ENCODE measurements at regions of chr12 and their contacts with region 1.

Region 1: DNA sequence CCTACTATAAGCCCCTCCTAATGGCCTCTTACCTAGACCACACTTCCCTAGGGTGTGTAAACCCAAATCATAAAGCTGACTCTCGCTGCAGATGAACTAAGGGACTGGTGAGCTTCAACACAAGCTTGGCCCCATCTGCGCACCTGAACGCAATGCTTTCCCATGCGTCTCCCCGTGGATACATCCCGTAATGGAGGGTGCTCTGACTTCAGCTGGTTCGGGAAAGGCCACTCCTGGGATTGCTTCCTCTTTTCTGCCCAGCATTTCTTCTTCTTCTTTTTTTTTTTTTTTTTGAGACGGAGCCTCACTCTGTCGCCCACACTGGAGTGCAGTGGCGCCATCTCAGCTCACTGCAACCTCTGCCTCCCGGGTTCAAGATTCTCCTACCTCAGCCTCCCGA is 27.7 kb upstream of the ETFBKMT start:
- DNase-seq: no peak
- H3K4me3 ChIP-seq: no peak overlapping the region
- H3K27ac ChIP-seq: no peak overlapping the region
- H3K4me1 ChIP-seq: no peaks in the 10 kb centered on the region
- H3K27me3 ChIP-seq: no peaks in the 10 kb centered on the region
- CTCF ChIP-seq: no peak
- POLR2A ChIP-seq: no peak

Region 2: DNA sequence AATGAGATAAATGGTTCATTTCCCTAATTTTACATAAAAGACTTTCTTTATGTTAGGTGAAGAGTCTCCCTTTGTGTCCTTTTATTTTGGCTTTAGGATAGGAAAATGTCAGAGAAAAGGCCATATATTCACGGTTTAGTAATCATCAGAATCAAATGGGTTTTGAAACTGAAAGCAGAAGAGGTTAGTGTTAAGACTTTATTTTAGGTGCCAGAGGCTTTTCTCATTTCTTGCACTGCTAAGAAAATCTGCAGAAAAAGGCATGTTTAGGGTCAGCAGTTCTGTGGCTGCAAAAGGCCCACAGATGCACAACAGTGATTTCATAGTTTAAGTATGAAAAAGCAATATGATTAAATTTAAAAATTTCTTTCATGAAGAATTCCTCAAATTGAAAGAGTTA is 225.4 kb before region 1 on chr12:
- intact Hi-C with region 1: loop called (anchors 2 kb)
- DNase-seq: no peak
- H3K4me3 ChIP-seq: no peak overlapping the region
- H3K27ac ChIP-seq: no peak overlapping the region
- H3K4me1 ChIP-seq: no peaks in the 10 kb centered on the region
- H3K27me3 ChIP-seq: no peaks in the 10 kb centered on the region
- CTCF ChIP-seq: no peak
- POLR2A ChIP-seq: no peak

Region 3: DNA sequence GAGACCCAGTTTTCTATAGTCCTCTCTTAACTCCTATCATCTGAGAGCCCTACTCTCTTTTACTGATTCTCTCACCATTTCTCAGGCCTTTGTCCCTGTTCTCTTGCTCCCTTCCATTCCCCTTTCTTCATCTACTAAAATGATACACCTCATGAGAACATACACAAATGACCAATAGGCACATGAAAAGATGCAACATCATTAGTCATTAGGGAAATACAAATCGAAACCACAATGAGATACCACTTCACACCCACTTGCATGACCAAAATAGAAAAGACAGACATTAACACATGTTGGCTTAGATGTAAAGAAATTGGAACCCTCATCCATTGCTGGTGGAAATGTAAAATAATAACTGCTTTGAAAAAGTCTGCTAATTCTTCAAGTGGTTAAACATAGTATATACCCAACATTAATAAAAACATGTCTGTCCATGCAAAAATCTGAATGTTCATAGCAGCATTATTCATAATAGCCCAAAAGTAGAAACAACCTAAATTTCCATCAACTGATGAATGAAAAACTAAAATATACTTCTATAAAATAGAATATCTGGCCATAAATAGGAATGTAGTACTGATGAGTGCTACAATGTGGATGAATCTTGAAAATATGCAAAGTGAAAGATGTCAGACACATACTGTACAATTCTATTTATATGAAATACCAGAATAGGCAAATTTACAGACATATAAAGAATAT is 106.8 kb before region 1 on chr12:
- intact Hi-C with region 1: no loop called
- DNase-seq: no peak
- H3K4me3 ChIP-seq: no peak overlapping the region
- H3K27ac ChIP-seq: no peak overlapping the region
- H3K4me1 ChIP-seq: no peaks in the 10 kb centered on the region
- H3K27me3 ChIP-seq: no peaks in the 10 kb centered on the region
- CTCF ChIP-seq: no peak
- POLR2A ChIP-seq: no peak

Region 4: DNA sequence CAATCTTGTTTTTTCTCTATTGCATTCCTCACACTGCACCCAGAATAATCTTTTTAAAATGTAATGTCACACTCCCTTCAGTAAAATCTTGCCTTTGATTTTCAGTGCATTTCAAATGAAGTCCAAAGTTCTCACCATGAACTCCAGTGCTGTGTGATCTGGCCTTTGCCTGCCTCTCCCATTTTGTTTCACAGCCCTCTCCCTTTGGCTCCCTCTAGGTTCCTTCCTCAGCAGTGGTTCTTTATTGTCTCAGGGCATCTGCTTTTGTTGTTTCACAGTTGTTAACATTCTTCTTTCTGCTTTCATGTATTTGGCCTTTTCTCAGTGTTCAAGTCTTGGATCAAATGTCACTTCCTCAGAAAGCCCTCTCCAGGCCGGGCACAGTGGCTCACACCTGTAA is 181.5 kb after region 1 on chr12:
- intact Hi-C with region 1: no loop called
- DNase-seq: no peak
- H3K4me3 ChIP-seq: no peak overlapping the region
- H3K27ac ChIP-seq: no peak overlapping the region
- H3K4me1 ChIP-seq: no peaks in the 10 kb centered on the region
- H3K27me3 ChIP-seq: no peaks in the 10 kb centered on the region
- CTCF ChIP-seq: no peak
- POLR2A ChIP-seq: no peak